OCI-LY7 (cell line): ENCODE measurements at regions of chr1 and their contacts with region 1.

Region 1: GRCh38 chr1:13725714-13726175 is 25.8 kb downstream of the PRDM2 start:
- DNase-seq: peak; percentile 78
- H3K4me3 ChIP-seq: no peak overlapping the region
- H3K27ac ChIP-seq: peak overlapping the region; percentile 22
- H3K4me1 ChIP-seq: peaks cover 58% of the 10 kb centered on the region
- CTCF ChIP-seq: peak; percentile 90

Region 2: DNA sequence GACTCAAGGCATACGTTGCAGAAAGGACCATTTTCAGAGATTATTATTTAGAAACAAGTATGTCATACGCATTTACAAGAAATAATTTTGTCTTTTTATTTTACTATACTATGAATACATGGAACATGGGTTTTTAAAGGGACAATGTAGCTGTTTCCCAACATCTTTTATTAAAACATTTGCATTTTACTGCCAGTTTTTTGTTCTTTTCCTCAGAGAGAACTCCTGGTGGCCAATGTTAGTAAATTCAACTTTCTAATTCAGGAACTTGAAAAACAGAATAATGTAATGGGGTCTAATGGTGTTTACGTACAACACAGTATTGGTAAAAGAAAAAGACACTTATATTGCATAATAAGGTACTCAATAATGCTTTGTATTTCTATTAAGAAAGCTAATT is 10.9 kb before region 1 on chr1:
- CTCF ChIA-PET with region 1: interaction called, 4 read pairs
- POLR2A ChIA-PET with region 1: interaction called, 14 read pairs
- intact Hi-C with region 1: no loop called
- DNase-seq: no peak
- H3K4me3 ChIP-seq: no peak overlapping the region
- H3K27ac ChIP-seq: no peak overlapping the region
- H3K4me1 ChIP-seq: peaks cover 38% of the 10 kb centered on the region
- CTCF ChIP-seq: peak; percentile 56

Region 3: DNA sequence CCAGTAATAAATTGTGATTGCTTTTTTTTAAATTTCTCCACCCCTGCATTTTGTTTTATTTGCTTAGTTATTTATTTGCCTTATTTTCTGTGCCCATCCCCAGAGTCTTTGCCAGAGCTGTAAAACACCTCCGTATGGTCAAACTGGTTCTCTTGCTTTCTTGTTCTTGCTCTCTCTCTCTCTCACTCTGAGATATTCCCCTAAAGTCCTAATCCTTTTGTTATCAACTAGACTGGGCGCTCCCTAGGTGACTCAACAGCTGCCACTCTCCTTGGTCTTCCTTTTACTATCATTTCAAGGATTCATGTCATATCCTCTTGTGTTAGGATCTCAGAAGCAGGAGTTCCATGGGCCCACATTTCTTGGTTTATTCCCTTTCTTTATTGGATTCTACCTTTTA is 134.3 kb after region 1 on chr1:
- CTCF ChIA-PET with region 1: no interaction called
- POLR2A ChIA-PET with region 1: no interaction called
- intact Hi-C with region 1: no loop called
- DNase-seq: no peak
- H3K4me3 ChIP-seq: no peak overlapping the region
- H3K27ac ChIP-seq: no peak overlapping the region
- H3K4me1 ChIP-seq: no peaks in the 10 kb centered on the region
- CTCF ChIP-seq: no peak